Activated naive CD4-positive, alpha-beta T cell treated with anti-CD3 and anti-CD28 coated beads, Interleukin-2, amount 10 ng/mL, durations not matched to agents 7 days and 5 days (primary cell): ENCODE measurements at regions of chr9 and their contacts with region 1.

Region 1: DNA sequence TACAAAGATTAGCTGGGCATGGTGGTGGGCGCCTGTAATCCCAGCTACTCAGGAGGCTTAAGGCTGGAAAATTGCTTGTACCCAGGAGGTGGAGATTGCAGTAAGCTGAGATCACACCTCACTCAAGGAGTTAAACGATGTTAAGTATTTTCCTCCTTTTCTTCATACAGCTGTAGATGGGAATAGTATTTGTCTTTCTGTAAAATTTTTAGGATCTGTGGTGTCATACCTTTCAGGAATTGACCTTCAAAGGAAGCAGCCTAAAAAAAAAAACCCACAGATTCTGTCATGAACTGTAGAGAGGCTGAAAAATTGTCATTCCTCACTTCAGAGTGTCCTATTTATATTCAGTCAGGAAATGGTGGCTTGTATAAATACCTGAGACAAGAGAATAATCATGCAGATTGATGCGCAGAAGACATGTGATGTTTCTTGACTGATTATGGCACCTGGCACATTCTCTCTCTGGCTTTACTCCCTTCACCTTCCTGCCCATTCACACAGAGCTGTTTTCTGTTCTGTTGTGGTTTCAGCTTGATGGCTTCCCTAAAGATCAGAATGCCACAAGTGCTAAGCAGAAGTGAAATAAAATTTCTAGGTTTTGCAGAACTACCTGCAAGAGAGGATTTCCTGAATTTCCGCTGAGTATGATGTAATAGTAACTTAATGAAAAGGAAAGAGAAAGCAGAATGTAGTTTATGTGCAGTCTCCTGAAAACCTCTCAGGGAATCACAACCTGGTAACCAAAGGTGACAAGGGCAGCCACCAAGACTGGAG is 3.8 kb downstream of the IFNA1 start:
- DNase-seq: peak; percentile 47
- H3K4me3 Mint-ChIP-seq: peak overlapping the region; percentile 32
- H3K27ac Mint-ChIP-seq: peak overlapping the region; percentile 75
- H3K4me1 Mint-ChIP-seq: peaks cover 21% of the 10 kb centered on the region
- H3K27me3 Mint-ChIP-seq: peaks cover 26% of the 10 kb centered on the region

Region 2: GRCh38 chr9:21326526-21327139 is 117.4 kb before region 1 on chr9:
- CTCF ChIA-PET with region 1: interaction called, 12 read pairs
- DNase-seq: no peak
- H3K4me3 Mint-ChIP-seq: no peak overlapping the region
- H3K27ac Mint-ChIP-seq: no peak overlapping the region
- H3K4me1 Mint-ChIP-seq: peaks cover 30% of the 10 kb centered on the region
- H3K27me3 Mint-ChIP-seq: no peaks in the 10 kb centered on the region